PC-9 (cell line): ENCODE measurements at regions of chrX and their contacts with region 1.

Region 1: DNA sequence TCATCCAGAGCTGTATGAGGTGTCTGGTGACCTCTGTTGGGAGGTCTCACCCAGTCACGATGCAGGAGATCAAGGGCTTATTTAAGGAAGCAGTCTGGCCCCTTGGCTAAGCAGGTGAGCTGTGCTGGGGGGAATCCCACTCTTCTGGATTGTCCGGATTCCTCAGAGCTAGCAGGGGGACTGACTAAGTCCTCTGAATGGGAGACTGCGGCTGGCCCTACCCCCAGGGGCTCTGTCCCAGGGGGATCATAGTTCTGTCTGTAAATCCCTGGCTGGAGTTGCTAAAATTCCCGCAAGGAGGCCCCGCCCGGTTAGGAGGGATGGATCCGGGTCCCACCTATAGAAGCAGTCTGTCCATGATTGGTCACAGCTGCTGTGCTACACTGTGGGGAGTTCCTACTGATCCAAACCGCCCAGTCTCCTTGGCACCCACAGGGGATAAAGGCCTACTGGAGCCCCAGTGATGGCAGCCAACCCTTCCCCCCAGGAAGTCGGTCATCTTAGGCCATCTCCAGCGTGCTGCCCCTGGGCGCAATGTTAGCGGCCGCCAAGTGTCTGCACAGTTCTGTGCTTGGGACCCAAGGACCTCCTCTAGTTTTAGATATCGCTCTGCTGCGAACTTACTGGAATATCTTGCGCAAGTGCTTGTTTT is 118.2 kb upstream of the KLF8 start:
- DNase-seq: peak; percentile 99 to 100
- H3K4me3 ChIP-seq: peak overlapping the region; percentile 39; the same call in 1 of the 2 replicates
- H3K27ac ChIP-seq: peak overlapping the region; percentile 84
- H3K4me1 ChIP-seq: peaks cover 34% of the 10 kb centered on the region
- H3K27me3 ChIP-seq: no peaks in the 10 kb centered on the region
- CTCF ChIP-seq: no peak

Region 2: GRCh38 chrX:56025872-56026571 is 87.9 kb before region 1 on chrX:
- CTCF ChIA-PET with region 1: interaction called, 6 read pairs
- POLR2A ChIA-PET with region 1: interaction called, 3 read pairs
- intact Hi-C with region 1: loop called (anchors 1 kb)
- DNase-seq: peak in 1 of 2 experiments; percentile 54
- H3K4me3 ChIP-seq: no peak overlapping the region
- H3K27ac ChIP-seq: no peak overlapping the region
- H3K4me1 ChIP-seq: peaks cover 29% of the 10 kb centered on the region
- H3K27me3 ChIP-seq: no peaks in the 10 kb centered on the region
- CTCF ChIP-seq: no peak

Region 3: GRCh38 chrX:56226980-56227379 is 113.1 kb after region 1 on chrX:
- CTCF ChIA-PET with region 1: no interaction called
- POLR2A ChIA-PET with region 1: interaction called, 6 read pairs
- intact Hi-C with region 1: loop called (anchors 1 kb)
- DNase-seq: no peak
- H3K4me3 ChIP-seq: no peak overlapping the region
- H3K27ac ChIP-seq: no peak overlapping the region
- H3K4me1 ChIP-seq: peaks cover 32% of the 10 kb centered on the region
- H3K27me3 ChIP-seq: no peaks in the 10 kb centered on the region
- CTCF ChIP-seq: no peak

Region 4: GRCh38 chrX:56503941-56504662 is 390.2 kb after region 1 on chrX:
- CTCF ChIA-PET with region 1: no interaction called
- POLR2A ChIA-PET with region 1: interaction called, 3 read pairs
- intact Hi-C with region 1: loop called (anchors 5 kb)
- DNase-seq: peak; percentile 89 to 91
- H3K4me3 ChIP-seq: peak overlapping the region; percentile 46
- H3K27ac ChIP-seq: peak overlapping the region; percentile 100
- H3K4me1 ChIP-seq: peaks cover 57% of the 10 kb centered on the region
- H3K27me3 ChIP-seq: no peaks in the 10 kb centered on the region
- CTCF ChIP-seq: no peak; the same call in 1 of the 2 replicates

Region 5: DNA sequence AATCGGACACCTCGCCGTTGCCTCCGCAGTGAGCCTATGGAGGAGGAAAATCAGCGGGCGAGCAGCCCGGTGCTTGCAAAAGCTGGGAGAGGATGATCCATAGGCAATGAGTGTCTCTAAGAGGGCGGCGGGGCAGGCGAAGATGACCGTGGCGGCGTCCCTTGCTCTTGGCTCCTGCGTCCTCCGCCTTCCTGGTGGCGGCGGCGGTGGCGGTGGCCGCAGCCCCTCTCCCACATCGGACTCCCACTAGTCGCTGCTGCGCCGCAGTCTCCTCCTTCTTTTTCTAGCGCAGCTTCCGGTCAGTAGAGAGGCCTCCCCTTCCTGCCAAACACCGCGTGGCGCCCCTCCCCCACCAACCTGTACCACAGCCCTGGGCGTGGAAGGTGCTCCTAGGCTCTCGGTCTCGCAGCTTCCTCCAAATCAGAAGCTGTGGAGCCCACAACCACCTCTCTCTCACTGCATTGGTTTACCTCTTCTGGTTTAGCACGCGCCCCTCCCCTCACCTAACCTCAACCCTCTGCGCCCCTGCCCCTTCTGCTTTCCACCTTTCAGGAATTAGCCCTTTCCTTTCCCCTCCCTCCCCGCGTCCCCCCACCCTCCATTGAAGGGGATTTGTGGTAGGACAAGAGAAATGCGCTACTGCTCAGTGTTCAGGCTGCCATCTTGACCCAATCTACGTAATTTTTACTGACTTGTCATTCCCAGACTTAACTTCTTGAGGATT is 881.5 kb after region 1 on chrX and contains the start of gene SPIN3:
- CTCF ChIA-PET with region 1: no interaction called
- POLR2A ChIA-PET with region 1: interaction called, 18 read pairs
- intact Hi-C with region 1: no loop called
- DNase-seq: peak; percentile 74 to 97
- H3K4me3 ChIP-seq: peak within 1 kb of the TSS; percentile 82
- H3K27ac ChIP-seq: peak within 1 kb of the TSS; percentile 70
- H3K4me1 ChIP-seq: no peaks in the 10 kb centered on the region; the same call in 1 of the 2 replicates
- H3K27me3 ChIP-seq: no peaks in the 10 kb centered on the region
- CTCF ChIP-seq: no peak
- total RNA-seq, gene SPIN3: 29.8 and 39.6 TPM in 2 replicates